HCT116 (cell line): ENCODE measurements at regions of chr19 and their contacts with region 1.

Region 1: GRCh38 chr19:10565567-10566407 is at the start of gene KRI1:
- DNase-seq: peak; percentile 90
- ATAC-seq: peak; percentile 60
- H3K4me3 ChIP-seq: peak within 1 kb of the TSS; percentile 76 to 95
- H3K27ac ChIP-seq: peak within 1 kb of the TSS; percentile 91
- H3K4me1 ChIP-seq: peaks cover 31 to 46% of the 10 kb centered on the region in 2 experiments
- H3K27me3 ChIP-seq: no peaks in the 10 kb centered on the region
- CTCF ChIP-seq: peak in 1 of 3 experiments; percentile 38; a peak in 2 of 6 replicates
- POLR2A ChIP-seq: peak; percentile 85
- RAD21 ChIP-seq: no peak
- total RNA-seq, gene KRI1: 44.0 TPM

Region 2: DNA sequence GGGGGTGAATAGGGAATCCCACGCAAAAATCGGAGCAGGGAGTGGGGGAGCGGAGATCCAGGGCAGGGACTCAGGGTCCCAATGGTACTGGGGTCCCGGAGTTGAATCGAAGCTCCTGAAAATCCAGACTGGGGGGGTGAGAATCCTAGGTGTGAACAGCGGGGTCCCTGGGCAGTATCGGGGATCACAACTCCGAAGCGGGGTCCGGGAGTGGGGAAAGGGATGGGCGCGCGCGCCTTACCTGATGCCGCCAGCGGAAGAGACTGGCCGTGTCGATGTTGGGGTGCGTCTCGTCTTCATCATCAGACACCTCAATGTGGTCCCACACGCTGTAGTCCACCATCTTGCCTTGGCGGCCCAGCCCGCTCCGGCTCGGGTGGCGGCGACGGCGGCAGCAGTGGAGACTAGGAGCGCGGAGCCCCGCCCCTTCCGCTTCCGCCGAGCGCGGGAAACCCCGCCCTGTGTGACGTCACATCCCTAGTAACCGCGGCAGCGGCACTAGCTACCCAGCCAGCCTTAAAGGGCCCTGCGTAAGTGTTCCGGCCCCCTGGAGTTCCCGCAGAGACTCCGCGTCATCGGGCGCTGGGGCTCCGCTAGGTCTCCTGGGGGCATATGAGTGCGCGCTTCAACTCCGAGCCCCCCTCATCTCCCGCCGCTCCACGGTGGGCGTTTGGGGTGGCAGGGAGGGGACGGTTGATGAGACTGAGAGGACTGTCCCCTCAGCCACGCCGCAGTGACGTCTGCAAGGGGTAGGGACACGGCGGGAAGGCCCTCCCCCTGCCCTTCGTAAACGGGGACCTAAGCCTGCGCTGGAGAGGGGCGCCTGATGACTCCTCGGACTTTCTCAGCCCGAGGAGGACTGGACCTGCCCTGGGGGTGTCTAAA is 162.4 kb before region 1 on chr19 and contains the start of gene CDC37:
- CTCF ChIA-PET with region 1: no interaction called
- POLR2A ChIA-PET with region 1: no interaction called
- RAD21 ChIA-PET with region 1: no interaction called
- intact Hi-C with region 1: loop called (anchors 5 kb)
- DNase-seq: peak; percentile 93
- ATAC-seq: peak; percentile 84
- H3K4me3 ChIP-seq: peak within 1 kb of the TSS; percentile 94 to 100
- H3K27ac ChIP-seq: peak within 1 kb of the TSS; percentile 79
- H3K4me1 ChIP-seq: peaks cover 11 to 36% of the 10 kb centered on the region in 2 experiments
- H3K27me3 ChIP-seq: no peaks in the 10 kb centered on the region
- CTCF ChIP-seq: no peak
- POLR2A ChIP-seq: peak; percentile 47
- RAD21 ChIP-seq: no peak
- total RNA-seq, gene CDC37: 260 TPM

Region 3: DNA sequence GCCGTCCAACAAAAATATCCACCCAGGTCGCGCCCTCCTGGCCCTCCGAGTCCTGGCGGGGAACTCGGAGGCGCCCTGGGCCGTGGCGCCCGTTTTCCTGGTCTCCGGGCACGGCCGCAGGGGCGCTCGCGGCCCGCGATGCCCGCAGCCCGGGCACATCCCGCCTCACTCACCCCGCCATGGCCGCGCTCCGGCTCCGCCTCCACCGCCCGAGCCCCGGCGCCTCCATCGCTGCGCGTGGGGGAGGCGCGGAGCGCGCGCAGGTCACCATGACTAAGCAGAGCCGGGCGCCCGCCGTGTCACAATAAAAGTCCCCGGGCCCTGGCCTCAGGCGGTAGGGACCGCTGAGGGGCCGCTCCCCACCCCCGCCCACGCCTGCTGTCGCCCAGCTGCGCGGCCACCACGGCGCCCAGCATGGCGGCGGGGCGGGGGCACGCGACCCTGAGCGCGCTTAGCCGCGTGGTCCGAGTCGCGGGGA is 63.2 kb before region 1 on chr19:
- CTCF ChIA-PET with region 1: no interaction called
- POLR2A ChIA-PET with region 1: no interaction called
- RAD21 ChIA-PET with region 1: no interaction called
- intact Hi-C with region 1: loop called (anchors 5 kb)
- DNase-seq: peak; percentile 79
- ATAC-seq: peak; percentile 87
- H3K4me3 ChIP-seq: peak overlapping the region; percentile 88 to 90
- H3K27ac ChIP-seq: peak overlapping the region; percentile 92
- H3K4me1 ChIP-seq: peaks cover 14 to 32% of the 10 kb centered on the region in 2 experiments
- H3K27me3 ChIP-seq: no peaks in the 10 kb centered on the region
- CTCF ChIP-seq: no peak
- POLR2A ChIP-seq: peak; percentile 92
- RAD21 ChIP-seq: no peak

Region 4: DNA sequence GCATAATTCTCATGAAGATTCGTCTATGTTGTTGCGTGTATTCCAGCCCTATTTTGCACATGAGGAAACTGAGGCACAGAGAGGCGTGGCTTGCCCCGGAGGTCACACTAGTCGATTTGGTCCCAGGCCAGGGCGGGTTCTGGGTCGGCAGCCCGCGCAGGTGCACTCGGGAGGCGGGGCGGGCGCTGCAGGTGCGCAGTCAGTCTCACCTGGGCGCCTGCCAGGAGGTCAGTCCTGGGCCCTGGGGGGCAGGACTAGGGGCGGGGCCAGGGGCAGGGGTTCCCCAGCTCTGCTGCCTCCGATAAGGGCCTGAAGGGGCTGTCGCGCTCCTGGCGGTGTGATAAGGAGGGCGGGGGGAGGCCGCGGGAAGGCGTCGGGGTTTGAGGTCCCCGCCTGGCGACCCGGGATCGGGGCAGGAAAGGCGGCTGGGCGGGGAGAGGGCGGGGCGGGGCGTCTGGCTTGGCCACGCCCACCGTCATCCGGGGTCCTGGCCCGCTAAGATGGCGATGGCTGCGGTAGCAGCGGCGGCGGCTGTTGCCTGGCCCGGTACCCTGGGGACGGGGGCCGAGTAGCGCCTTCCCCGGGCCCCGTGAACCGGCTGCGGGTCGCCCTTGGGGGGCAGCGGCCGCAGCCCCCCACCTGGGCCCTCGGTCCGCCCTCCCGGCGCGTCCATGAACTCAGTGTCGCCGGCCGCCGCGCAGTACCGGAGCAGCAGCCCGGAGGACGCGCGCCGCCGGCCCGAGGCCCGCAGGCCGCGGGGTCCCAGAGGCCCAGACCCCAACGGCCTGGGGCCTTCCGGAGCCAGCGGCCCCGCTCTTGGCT is 22.2 kb before region 1 on chr19 and contains the start of gene ATG4D:
- CTCF ChIA-PET with region 1: interaction called, 4 read pairs
- POLR2A ChIA-PET with region 1: no interaction called
- RAD21 ChIA-PET with region 1: no interaction called
- intact Hi-C with region 1: loop called (anchors 2 kb)
- DNase-seq: peak; percentile 56
- ATAC-seq: peak; percentile 80
- H3K4me3 ChIP-seq: peak within 1 kb of the TSS; percentile 92 to 93
- H3K27ac ChIP-seq: peak within 1 kb of the TSS; percentile 91
- H3K4me1 ChIP-seq: peaks cover 10 to 24% of the 10 kb centered on the region in 2 experiments; a peak in 3 of 4 replicates
- H3K27me3 ChIP-seq: no peaks in the 10 kb centered on the region
- CTCF ChIP-seq: no peak
- POLR2A ChIP-seq: peak; percentile 44
- RAD21 ChIP-seq: no peak
- total RNA-seq, gene ATG4D: 45.4 TPM

Region 5: DNA sequence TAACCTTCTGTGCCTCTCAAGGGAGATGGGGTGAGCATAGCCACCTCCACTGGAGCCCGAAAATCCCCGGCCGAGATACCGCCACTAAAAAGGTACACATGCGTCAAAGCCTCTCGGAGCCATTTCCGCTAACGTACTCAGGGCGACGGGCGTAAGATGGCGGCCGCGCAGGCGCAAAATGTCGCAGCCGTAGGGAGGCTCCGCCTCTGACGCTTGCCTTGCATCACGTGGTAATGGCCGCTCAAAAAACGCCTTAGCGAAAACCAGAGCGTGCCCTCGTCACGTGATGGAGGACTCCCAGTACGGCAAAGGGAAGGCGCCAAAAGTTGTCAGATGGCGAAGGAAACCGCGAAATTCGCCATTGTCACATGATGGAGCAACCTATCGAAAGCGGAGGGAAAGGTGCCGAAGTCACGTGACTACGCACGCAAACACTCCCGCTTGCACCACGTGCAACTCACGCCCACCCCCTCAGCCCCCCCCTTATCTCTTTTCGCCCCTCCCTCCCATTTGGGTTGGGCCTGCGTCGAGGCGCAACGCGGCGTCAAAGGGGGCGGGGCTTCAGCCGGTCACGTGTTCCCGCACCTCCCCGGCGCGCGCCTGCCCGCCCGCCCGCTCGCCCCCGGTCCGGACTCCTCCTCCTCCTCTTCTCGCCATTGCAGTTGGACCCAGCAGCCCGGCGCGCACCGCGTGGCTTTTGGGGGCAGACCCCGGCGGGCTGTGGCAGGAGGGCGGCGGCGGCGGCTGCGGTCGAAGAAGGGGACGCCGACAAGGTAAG is 88.1 kb after region 1 on chr19 and contains the start of gene ILF3:
- CTCF ChIA-PET with region 1: no interaction called
- POLR2A ChIA-PET with region 1: no interaction called
- RAD21 ChIA-PET with region 1: no interaction called
- intact Hi-C with region 1: loop called (anchors 5 kb)
- DNase-seq: peak; percentile 100
- ATAC-seq: peak; percentile 80
- H3K4me3 ChIP-seq: peak within 1 kb of the TSS; percentile 80 to 99
- H3K27ac ChIP-seq: peak within 1 kb of the TSS; percentile 94
- H3K4me1 ChIP-seq: peaks cover 11 to 31% of the 10 kb centered on the region in 2 experiments
- H3K27me3 ChIP-seq: no peaks in the 10 kb centered on the region
- CTCF ChIP-seq: no peak
- POLR2A ChIP-seq: peak; percentile 90
- RAD21 ChIP-seq: no peak
- total RNA-seq, gene ILF3: 430 TPM